ENCODE measurements at regions of chr15 and their contacts with region 1.

Region 1: DNA sequence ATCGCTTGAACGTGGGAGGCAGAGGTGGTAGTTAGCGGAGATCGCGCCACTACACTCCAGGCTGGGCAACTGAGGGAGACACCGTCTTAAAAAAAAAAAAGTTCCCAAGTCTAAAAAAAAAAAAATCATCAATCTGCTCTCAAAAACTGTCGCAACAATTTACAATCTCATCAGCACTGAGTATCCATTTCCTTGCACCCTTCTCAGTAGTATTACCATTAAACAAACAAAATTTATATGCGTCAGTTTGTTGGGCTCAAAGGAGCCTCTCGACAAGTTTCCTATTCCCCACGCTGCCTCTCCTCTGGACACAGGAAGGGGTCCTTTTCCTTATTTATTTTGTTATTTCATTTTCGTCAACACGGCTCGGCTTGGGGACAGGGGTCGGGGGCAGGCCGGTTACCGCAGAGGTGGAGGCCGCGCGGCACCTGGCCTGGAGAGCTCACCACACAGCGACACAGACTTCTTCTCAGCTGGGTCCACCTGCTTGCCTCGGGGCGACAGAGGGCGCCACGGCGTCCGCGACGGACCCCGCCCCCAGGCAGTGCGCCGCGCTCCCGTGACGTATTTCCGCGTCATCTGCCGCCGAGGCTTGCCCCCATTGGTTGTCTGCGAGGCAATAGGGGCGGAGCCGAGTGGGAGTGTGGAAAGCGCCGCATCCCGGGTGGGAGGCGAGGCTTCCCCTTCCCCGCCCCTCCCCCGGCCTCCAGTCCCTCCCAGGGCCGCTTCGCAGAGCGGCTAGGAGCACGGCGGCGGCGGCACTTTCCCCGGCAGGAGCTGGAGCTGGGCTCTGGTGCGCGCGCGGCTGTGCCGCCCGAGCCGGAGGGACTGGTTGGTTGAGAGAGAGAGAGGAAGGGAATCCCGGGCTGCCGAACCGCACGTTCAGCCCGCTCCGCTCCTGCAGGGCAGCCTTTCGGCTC is at the start of gene MAP2K1:
- DNase-seq: peak; percentile 98 to 99 (median 99)
- ATAC-seq: peak; percentile 94
- H3K4me3 ChIP-seq: peak within 1 kb of the TSS; percentile 86
- H3K4me1 ChIP-seq: peaks cover 15% of the 10 kb centered on the region
- CTCF ChIP-seq: peak; percentile 76
- total RNA-seq, gene MAP2K1: 34.4 to 45.3 (median 44.0) TPM

Region 2: GRCh38 chr15:66497502-66498455 is 111.3 kb after region 1 on chr15 and contains the start of gene SNAPC5:
- intact Hi-C with region 1: loop called (anchors 5 to 10 kb)
- DNase-seq: peak; percentile 98 to 99 (median 98)
- ATAC-seq: peak; percentile 99
- H3K4me3 ChIP-seq: peak within 1 kb of the TSS; percentile 78
- H3K4me1 ChIP-seq: peaks cover 15% of the 10 kb centered on the region
- CTCF ChIP-seq: peak; percentile 97
- total RNA-seq, gene SNAPC5: 17.5 to 31.8 (median 21.1) TPM